ENCODE measurements at regions of chr1 and their contacts with region 1.

Region 1: DNA sequence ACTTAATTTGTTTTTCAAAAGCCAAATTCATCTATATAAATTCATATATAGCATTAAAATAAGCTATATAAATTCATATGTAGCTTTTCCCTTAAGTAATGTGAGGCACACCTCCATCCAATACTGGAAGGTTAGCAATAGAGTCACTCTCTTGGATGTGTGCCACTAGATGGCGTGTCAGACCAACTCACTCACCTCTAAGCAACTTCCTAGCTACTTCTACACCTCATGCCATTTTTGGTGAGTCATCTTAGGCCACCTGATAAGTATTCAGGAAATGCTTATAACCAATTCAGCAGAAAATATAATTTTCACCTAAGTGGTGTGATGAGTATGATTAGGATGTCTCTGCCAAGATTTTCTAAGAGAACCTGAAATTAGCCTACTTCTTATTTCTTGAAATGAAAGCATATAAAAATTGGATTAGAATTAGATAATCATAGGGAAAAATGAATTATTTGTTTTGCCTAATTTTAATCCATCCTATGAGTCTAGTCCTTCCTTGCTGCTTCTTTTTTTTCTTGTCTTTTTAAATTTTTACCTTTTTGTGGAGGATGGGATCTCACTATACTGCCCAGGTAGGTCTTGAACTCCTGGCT is 34.4 kb upstream of the TADA1 start:
- DNase-seq: peak; percentile 90
- H3K4me3 Mint-ChIP-seq: no peak overlapping the region
- H3K27ac Mint-ChIP-seq: no peak overlapping the region
- H3K4me1 Mint-ChIP-seq: peaks cover 5% of the 10 kb centered on the region
- H3K27me3 Mint-ChIP-seq: no peaks in the 10 kb centered on the region

Region 2: GRCh38 chr1:166875734-166876539 is 34.6 kb before region 1 on chr1 and contains the start of gene TADA1:
- CTCF ChIA-PET with region 1: interaction called, 10 read pairs
- intact Hi-C with region 1: loop called (anchors 1 kb)
- DNase-seq: peak; percentile 100
- H3K4me3 Mint-ChIP-seq: peak within 1 kb of the TSS; percentile 99
- H3K27ac Mint-ChIP-seq: peak within 1 kb of the TSS; percentile 97
- H3K4me1 Mint-ChIP-seq: peaks cover 37% of the 10 kb centered on the region
- H3K27me3 Mint-ChIP-seq: no peaks in the 10 kb centered on the region
- total RNA-seq, gene TADA1: 19.6 to 19.9 TPM

Region 3: DNA sequence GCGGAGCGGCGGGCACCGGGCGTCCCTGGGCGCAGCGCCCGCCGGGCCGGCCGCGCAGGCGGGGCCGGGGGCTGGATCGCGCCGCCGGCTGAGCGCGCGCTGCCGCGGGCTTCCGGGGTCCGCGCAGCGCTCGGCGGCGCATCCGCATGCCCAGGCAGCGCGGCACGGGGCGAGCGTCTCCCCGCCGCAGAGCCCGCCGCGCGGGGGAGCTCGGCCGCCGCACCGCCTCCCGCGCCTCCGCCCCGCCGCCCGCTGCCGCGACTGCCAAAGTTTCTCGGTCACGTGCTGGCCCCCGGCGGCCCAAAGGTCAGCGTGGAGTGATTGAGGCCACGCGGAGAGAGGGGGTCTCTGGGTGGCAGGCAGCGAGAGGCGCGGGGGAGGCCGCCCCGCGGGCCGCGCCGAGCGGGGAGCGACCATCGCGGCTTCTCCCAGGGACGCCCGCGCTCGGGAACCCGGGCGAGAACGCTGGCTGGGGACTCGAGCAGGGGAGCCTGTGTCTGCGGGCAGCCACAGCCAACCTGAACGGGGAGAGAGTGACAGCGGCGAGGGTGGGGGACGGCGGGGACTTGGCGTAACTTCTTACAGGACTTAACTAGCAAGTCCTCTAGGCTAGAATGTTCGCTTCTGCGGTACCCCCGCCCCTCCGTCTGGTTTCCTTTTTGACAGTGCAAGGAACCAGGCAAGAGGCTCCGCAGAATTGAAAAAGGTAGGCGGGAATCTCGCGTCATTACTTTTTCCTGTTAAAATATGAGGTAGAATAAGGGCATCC is 65.0 kb after region 1 on chr1 and contains the start of gene ILDR2:
- CTCF ChIA-PET with region 1: interaction called, 6 read pairs
- intact Hi-C with region 1: loop called (anchors 1 kb)
- DNase-seq: peak; percentile 84
- H3K4me3 Mint-ChIP-seq: peak within 1 kb of the TSS; percentile 91
- H3K27ac Mint-ChIP-seq: peak within 1 kb of the TSS; percentile 90
- H3K4me1 Mint-ChIP-seq: peaks cover 36% of the 10 kb centered on the region
- H3K27me3 Mint-ChIP-seq: peaks cover 10% of the 10 kb centered on the region
- total RNA-seq, gene ILDR2: 9.1 to 10.5 TPM

Region 4: GRCh38 chr1:167066333-167067122 is 156.0 kb after region 1 on chr1:
- CTCF ChIA-PET with region 1: interaction called, 635 read pairs
- intact Hi-C with region 1: no loop called
- DNase-seq: peak; percentile 82
- H3K4me3 Mint-ChIP-seq: no peak overlapping the region
- H3K27ac Mint-ChIP-seq: no peak overlapping the region
- H3K4me1 Mint-ChIP-seq: peaks cover 2% of the 10 kb centered on the region
- H3K27me3 Mint-ChIP-seq: no peaks in the 10 kb centered on the region

Region 5: GRCh38 chr1:167115655-167116054 is 205.2 kb after region 1 on chr1:
- CTCF ChIA-PET with region 1: no interaction called
- intact Hi-C with region 1: no loop called
- DNase-seq: no peak
- H3K4me3 Mint-ChIP-seq: no peak overlapping the region
- H3K27ac Mint-ChIP-seq: no peak overlapping the region
- H3K4me1 Mint-ChIP-seq: peaks cover 5% of the 10 kb centered on the region
- H3K27me3 Mint-ChIP-seq: no peaks in the 10 kb centered on the region

Region 6: DNA sequence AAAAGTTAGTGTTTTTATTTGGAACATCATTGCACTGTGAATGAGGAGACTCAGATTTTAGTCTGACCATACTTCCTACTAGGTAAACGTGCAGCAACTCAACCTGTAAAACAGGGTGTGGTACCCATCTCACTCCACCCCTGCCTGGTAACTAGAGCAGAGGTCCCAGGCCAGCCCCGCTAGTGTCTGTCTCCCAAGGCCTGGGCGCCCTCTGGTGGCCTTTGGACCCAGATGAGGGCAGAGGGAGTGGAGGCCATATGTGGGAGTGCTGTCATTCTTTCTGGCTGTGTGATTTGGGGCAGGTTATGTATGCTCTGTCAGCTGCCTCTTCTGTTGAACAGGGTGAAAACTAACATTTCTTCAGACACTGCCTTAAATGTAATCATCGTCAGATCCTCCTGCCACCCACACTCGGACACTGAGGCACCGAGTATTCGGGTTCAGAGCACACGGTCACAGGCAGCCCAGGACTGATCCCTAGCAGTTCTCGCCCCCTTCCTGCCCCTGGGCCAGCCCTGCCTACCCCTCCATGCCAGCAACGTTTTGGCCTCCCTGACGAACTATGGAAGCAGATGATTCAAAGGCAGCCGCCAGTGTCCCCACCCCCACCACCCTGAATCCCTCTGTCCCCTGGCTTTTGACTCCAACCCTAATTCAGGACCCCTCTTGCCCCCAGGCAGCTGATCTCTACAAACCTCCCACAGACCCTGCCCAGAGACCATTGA is 531.8 kb after region 1 on chr1:
- CTCF ChIA-PET with region 1: no interaction called
- intact Hi-C with region 1: loop called (anchors 10 kb)
- DNase-seq: peak; percentile 93
- H3K4me3 Mint-ChIP-seq: no peak overlapping the region
- H3K27ac Mint-ChIP-seq: peak overlapping the region; percentile 79
- H3K4me1 Mint-ChIP-seq: peaks cover 74% of the 10 kb centered on the region
- H3K27me3 Mint-ChIP-seq: no peaks in the 10 kb centered on the region